Left lung (tissue), 14 donors: ENCODE measurements at regions of chr2 and their contacts with region 1.

Region 1: GRCh38 chr2:109128048-109128465 is 948 bp upstream of the SH3RF3 start:
- DNase-seq: peak; percentile 82 to 94 (median 88)
- ATAC-seq: peak; percentile 88
- H3K4me3 ChIP-seq: peak overlapping the region; percentile 63 to 73
- H3K27ac ChIP-seq: peak overlapping the region; percentile 59 to 82
- H3K4me1 ChIP-seq: peaks cover 0 to 47% of the 10 kb centered on the region in 2 donors
- H3K27me3 ChIP-seq: peaks cover 3 to 66% of the 10 kb centered on the region in 2 donors
- CTCF ChIP-seq: peak; percentile 86 to 94

Region 2: DNA sequence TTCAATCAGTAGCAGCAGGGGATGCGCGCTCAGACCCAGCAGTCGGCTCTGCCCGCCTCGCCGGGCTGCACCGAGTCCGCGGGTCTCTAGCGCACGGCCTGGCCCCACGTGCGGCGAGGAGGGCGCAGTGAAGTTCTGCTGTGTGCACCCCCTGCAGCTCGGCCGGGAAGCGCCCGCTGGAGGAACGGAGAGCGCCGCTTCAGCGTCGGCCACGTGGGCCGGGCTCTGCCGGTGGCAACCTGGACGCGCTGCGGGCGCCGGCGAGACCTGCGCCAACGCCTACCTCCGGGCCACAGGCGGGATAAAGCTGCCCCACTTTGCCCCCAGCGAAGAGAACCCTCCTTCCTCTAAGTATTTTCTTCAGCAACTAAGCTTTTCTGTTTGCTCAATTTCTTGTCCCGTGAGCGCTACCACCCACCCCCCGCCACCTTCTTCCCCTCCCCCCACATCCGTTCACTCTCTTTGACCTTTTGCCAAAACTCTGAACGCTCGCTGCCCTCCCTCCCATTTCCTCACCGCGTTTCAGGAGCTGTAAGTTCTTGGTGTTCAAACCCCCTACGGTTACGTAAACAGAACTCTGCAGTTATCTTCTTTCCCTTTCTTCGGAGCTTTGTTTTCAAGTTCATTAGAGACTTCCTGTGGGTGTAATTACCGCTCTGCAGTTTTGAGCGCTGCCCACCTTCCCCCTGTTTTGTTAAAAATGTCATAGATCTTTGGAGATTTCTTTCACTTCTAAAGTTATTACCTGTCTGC is 96.4 kb before region 1 on chr2:
- intact Hi-C with region 1: no loop called
- DNase-seq: peak; percentile 36 to 92 (median 62)
- ATAC-seq: peak; percentile 90
- H3K4me3 ChIP-seq: peak overlapping the region; percentile 23 to 48
- H3K27ac ChIP-seq: peak overlapping the region in 1 of 2 donors; percentile 86
- H3K4me1 ChIP-seq: peaks cover 0 to 25% of the 10 kb centered on the region in 2 donors
- H3K27me3 ChIP-seq: no peaks in the 10 kb centered on the region
- CTCF ChIP-seq: no peak

Region 3: DNA sequence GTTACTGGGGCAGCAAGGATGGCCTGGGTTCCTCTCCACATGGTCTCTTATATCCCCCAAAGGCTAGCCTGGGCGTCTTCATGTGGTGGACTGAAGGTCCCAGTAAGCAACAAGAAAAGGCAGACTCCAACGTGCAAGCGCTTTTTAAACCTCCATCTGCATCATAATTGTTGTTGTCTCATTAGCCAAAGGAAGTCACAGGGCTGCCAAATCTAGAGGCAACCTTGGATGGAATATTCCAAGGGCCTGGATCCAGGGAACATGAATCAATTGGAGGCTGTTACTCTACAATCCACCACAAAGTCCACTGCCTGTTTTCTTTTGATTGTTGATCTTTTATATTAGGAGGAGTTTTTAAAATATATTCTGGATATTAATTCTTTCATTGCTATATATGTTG is 119.8 kb after region 1 on chr2:
- intact Hi-C with region 1: no loop called
- DNase-seq: no peak
- ATAC-seq: peak; percentile 13
- H3K4me3 ChIP-seq: no peak overlapping the region
- H3K27ac ChIP-seq: peak overlapping the region in 1 of 2 donors; percentile 2
- H3K4me1 ChIP-seq: peaks cover 17 to 34% of the 10 kb centered on the region in 2 donors
- H3K27me3 ChIP-seq: no peaks in the 10 kb centered on the region
- CTCF ChIP-seq: no peak

Region 4: DNA sequence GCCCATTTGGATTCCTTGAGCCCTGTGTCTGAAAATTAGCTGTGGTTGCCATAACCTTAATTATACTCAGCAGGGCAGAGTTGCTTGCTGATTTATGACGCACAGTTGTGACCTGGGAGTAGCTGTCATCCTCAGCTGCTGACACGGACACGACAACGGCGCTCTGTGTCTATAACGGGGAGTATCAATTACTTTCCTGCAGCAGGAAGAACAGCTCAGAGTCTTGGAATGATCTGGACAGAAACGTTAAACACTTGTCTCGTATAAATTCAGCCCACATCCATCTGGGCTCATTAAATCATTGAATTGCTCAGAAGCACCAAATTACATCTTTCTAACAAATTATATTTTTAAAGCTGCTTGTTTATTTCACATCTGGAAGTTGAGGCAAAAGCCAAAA is 369.4 kb after region 1 on chr2:
- intact Hi-C with region 1: loop called in 1 of 2 experiments (anchors 5 kb)
- DNase-seq: no peak
- ATAC-seq: no peak
- H3K4me3 ChIP-seq: no peak overlapping the region
- H3K27ac ChIP-seq: no peak overlapping the region
- H3K4me1 ChIP-seq: peaks cover 7 to 15% of the 10 kb centered on the region in 2 donors
- H3K27me3 ChIP-seq: no peaks in the 10 kb centered on the region
- CTCF ChIP-seq: no peak

Region 5: DNA sequence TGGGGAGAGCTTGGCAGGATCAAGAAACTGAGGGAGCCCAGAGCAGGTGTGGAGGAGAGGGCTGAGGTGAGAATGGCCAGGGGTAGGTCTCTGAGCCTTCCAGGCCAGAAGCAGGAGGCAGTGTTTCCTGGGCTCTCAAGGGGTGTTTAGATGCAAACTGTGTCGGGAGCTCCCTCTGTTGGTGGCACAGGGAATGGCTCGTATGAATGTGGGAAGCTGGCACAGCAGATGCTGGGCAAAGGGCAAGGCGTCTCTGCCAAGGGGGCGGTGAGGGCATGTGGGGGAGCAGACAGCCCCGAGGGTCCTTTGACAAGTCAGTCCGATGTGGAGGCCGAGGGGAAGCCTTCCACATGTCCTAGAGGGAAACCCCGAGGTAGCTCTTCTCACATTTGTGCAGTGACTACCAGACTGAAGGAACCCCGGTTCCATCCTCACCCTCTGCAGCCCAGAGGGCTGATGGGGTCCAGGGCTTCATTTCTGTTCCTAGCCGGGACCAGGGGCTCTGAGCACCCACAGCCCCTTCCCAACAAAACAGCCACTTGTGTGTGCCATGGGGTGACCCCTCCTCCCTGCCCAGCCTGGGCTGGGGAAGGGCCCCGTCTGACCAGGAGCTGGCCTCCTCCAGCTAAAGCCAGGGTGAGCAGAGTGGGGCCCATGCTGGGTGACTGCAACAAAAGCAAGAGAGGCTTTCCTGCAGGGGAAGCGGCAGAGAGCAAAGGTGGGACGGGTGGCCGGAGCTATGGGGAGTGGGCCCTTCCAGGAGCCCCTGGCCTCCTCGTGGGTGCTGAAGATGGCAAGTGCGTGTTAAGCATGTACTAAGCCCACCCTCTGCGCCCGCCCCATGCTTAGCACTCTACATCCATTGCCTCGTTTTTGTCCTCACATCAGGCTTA is 382.3 kb after region 1 on chr2:
- intact Hi-C with region 1: loop called in 1 of 2 experiments (anchors 5 kb)
- DNase-seq: peak in 3 of 4 donors; percentile 71 to 81 (median 72)
- ATAC-seq: peak; percentile 90
- H3K4me3 ChIP-seq: no peak overlapping the region
- H3K27ac ChIP-seq: no peak overlapping the region
- H3K4me1 ChIP-seq: no peaks in the 10 kb centered on the region
- H3K27me3 ChIP-seq: no peaks in the 10 kb centered on the region
- CTCF ChIP-seq: peak; percentile 85 to 91